HEK293 (cell line): ENCODE measurements at regions of chr19 and their contacts with region 1.

Region 1: GRCh38 chr19:47697863-47698609 is 15.2 kb upstream of the EHD2 start:
- H3K4me3 ChIP-seq: no peak overlapping the region
- H3K27ac ChIP-seq: 0 out of 2 replicates have a peak overlapping the region, but pooled peaks have one; percentile 52
- H3K4me1 ChIP-seq: no peaks in the 10 kb centered on the region
- CTCF ChIP-seq: peak; percentile 97

Region 2: DNA sequence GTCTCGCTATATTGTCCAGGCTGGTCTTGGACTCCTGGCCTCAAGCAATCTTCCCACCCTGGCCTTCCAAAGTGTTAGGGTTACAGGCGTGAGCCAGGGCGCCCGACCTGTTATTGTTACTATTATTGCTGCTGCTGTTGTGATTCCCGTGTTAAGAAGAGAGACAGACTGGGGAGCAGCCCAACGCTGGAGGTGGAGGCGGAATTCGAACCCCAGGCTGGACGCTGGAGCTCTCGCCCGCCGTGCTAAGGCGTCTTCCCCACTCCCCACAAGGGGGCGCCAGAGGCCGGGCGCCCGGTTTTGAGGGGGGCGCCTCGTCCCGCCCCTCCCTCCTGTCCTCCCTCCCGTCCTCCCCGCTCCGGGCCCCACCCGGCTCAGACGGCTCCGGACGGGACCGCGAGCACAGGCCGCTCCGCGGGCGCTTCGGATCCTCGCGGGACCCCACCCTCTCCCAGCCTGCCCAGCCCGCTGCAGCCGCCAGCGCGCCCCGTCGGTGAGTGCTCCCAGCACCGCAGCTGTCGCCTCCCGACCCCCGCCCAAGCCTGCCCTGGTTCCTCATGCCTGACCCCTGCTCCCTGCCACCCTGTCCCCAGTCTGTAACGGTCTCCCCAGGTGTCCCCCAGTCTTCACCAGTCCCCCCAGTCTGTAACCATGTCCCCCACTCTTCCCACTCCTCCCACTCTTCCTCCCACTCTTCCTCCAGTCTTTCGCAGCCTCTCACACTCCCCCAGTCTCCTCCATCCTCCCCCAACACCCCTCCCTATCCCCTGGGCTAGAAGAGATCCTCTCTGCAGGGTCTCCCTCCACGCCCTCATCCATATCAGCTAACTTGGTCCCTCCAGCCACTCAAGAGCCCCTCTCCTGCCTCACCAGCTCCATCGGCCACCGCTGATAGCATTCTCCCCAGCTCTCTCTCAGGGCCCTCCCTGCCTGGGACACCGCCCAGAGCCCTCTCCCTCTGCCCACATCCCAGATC is 15.3 kb after region 1 on chr19 and contains the start of gene EHD2:
- CTCF ChIA-PET with region 1: interaction called, 25 read pairs
- POLR2A ChIA-PET with region 1: no interaction called
- H3K4me3 ChIP-seq: peak within 1 kb of the TSS; percentile 13
- H3K27ac ChIP-seq: no peak within 1 kb of the TSS
- H3K4me1 ChIP-seq: no peaks in the 10 kb centered on the region
- CTCF ChIP-seq: no peak